GM13977 (cell line): ENCODE measurements at regions of chr3 and their contacts with region 1.

Region 1: DNA sequence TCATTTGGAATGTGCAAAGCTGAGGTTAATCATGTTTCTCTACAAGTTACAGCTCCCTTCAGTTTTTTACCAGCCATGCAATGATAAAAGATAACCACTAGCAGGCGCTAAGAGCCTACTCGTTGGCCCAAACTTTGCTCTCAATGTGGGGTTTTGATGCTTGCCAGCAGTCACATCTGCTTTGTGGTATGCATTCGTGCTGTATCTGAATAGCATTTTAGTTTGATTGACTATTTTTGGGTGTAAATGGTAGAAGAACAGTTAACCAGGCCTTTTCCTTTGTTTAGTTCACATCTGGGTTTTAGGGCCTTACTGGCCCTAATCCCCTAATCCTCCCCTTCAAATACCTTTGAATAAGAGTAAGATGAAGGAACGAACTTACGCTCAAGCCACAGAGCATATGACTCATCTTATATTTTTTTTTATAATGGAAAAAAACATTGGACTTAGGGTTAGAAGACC is 4.4 kb upstream of the CLDN11 start:
- DNase-seq: peak; percentile 71
- CTCF ChIP-seq: peak; percentile 88

Region 2: GRCh38 chr3:170641510-170642236 is 227.4 kb after region 1 on chr3:
- in situ Hi-C with region 1: no loop called
- DNase-seq: no peak
- CTCF ChIP-seq: no peak

Region 3: DNA sequence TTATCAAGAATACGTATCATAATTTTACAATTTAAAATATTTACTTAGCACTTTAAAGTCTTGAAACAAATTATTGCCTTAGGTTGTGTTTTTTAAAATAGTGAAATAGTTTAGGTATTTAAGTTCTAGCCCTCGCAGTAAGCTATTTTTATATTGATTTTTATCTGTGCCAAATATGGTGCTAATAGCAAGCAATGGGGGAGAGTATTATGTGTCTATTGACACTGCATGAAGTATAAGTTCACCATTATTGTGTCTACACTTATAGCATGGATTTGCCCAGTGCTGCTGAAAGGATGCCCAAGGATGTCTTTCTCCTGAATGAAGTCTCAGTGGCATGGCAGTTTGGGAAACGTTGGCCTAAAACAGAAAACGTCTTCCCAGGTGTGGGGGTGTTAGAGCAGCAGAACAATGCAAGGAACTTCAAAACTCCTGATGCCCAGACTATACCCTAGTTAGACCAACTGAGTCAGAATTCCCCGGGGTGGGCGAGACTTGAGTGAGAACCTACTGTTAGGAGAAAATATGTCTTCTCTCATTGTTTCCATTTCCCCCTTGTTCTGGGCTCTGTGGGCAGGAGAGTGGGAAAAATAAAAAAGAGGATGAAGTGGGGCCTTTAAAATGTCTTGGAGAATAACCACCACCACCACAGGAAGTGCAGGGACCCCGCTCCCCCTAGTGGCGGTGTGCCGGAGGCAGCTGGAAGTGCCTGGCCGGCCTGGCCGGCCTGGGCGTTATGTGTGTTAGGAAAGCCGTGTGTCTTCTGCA is 275.8 kb after region 1 on chr3:
- in situ Hi-C with region 1: loop called (anchors 25 kb)
- DNase-seq: peak; percentile 41
- CTCF ChIP-seq: peak; percentile 90

Region 4: GRCh38 chr3:170811928-170812591 is 397.8 kb after region 1 on chr3:
- in situ Hi-C with region 1: loop called (anchors 10 kb)
- DNase-seq: peak; percentile 73
- CTCF ChIP-seq: peak; percentile 86